ENCODE measurements at regions of chr10 and their contacts with region 1.

Region 1: DNA sequence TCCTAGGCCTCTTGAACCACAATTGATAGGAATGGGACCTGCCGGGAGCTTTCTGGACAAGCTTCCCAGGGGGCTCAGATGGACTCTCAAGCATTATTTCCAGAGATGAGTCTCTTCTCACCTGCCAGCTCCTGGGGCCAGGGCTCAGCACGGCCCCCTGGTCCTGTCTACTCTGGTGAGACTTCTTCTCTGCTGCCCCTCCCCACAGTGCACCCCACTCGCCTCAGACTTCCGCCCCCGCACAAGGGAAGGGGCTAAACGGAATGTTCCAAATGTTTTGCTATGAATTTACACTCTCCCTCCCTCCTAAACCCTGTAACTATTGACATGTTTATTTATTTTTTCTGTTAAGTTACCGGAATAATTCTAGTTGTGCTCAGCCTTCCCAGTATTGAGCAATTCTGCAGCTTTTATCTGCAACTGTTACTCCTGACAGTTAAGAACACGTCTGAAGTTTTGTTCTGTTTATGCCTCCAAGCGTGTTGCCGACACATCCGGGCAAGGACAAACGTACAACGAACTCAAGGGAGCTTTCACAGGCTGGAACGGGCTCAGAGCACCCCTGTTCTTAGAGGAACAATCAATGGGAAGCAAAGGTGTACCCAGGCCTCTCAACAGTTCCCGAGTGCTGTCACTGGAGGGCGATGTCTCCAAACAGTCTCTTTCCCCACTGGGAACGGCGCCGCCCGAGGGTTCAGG is 55.2 kb downstream of the FHIP2A start:
- DNase-seq: peak in 2 of 9 donors; percentile 2 to 55
- ATAC-seq: peak; percentile 63
- H3K4me3 ChIP-seq: no peak overlapping the region
- H3K4me3 Mint-ChIP-seq: no peak overlapping the region
- H3K27ac ChIP-seq: no peak overlapping the region
- H3K27ac Mint-ChIP-seq: no peak overlapping the region
- H3K4me1 ChIP-seq: no peaks in the 10 kb centered on the region
- H3K4me1 Mint-ChIP-seq: peaks cover 0 to 30% (median 12%) of the 10 kb centered on the region in 7 donors
- H3K27me3 ChIP-seq: peaks cover 0 to 5% of the 10 kb centered on the region in 2 donors
- H3K27me3 Mint-ChIP-seq: peaks cover 36 to 76% (median 44%) of the 10 kb centered on the region in 5 donors

Region 2: GRCh38 chr10:114937962-114938855 is 61.5 kb after region 1 on chr10 and contains the start of gene TRUB1:
- CTCF ChIA-PET with region 1: no interaction called
- POLR2A ChIA-PET with region 1: no interaction called
- intact Hi-C with region 1: loop called in 1 of 2 experiments (anchors 5 kb)
- DNase-seq: peak; percentile 59 to 91 (median 87)
- ATAC-seq: peak; percentile 100
- H3K4me3 ChIP-seq: peak within 1 kb of the TSS; percentile 87
- H3K4me3 Mint-ChIP-seq: peak within 1 kb of the TSS; percentile 94 to 99 (median 96)
- H3K27ac ChIP-seq: peak within 1 kb of the TSS; percentile 79
- H3K27ac Mint-ChIP-seq: peak within 1 kb of the TSS; percentile 95 to 98 (median 96)
- H3K4me1 ChIP-seq: peaks cover 12 to 23% of the 10 kb centered on the region in 2 donors
- H3K4me1 Mint-ChIP-seq: peaks cover 20 to 43% (median 31%) of the 10 kb centered on the region in 7 donors
- H3K27me3 ChIP-seq: no peaks in the 10 kb centered on the region
- H3K27me3 Mint-ChIP-seq: no peaks in the 10 kb centered on the region
- total RNA-seq, gene TRUB1: 6.8 to 14.6 (median 12.9) TPM

Region 3: DNA sequence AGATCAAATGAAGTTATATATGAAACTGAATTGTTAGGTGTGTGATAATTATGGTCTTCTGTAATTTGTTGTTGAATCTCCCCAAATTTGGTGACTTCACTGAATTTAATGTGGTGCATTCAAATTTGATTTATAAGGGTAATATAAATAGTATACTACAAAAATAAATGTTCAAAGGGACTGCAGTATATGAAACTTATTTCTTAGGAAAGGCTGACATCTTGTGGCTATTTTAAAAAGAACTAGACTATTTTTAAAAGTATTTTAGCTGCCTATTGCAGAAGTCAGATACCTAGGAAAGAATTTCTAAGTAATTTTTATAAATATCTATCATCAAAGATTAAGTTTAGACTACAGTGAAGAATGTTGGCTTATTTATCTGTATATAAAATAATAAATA is 253.0 kb after region 1 on chr10:
- CTCF ChIA-PET with region 1: no interaction called
- POLR2A ChIA-PET with region 1: no interaction called
- intact Hi-C with region 1: loop called in 1 of 2 experiments (anchors 1 kb)
- DNase-seq: peak in 4 of 9 donors; percentile 2 to 14 (median 6)
- ATAC-seq: no peak
- H3K4me3 ChIP-seq: no peak overlapping the region
- H3K4me3 Mint-ChIP-seq: no peak overlapping the region
- H3K27ac ChIP-seq: no peak overlapping the region
- H3K27ac Mint-ChIP-seq: no peak overlapping the region
- H3K4me1 ChIP-seq: no peaks in the 10 kb centered on the region
- H3K4me1 Mint-ChIP-seq: no peaks in the 10 kb centered on the region
- H3K27me3 ChIP-seq: no peaks in the 10 kb centered on the region
- H3K27me3 Mint-ChIP-seq: peaks cover 1 to 18% (median 12%) of the 10 kb centered on the region in 5 donors

Region 4: GRCh38 chr10:116385994-116386809 is 1509.5 kb after region 1 on chr10:
- CTCF ChIA-PET with region 1: no interaction called
- POLR2A ChIA-PET with region 1: no interaction called
- intact Hi-C with region 1: loop called in 1 of 2 experiments (anchors 5 kb)
- DNase-seq: peak in 3 of 9 donors; percentile 1 to 13 (median 5)
- ATAC-seq: no peak
- H3K4me3 ChIP-seq: no peak overlapping the region
- H3K4me3 Mint-ChIP-seq: no peak overlapping the region
- H3K27ac ChIP-seq: no peak overlapping the region
- H3K27ac Mint-ChIP-seq: no peak overlapping the region
- H3K4me1 ChIP-seq: no peaks in the 10 kb centered on the region
- H3K4me1 Mint-ChIP-seq: no peaks in the 10 kb centered on the region
- H3K27me3 ChIP-seq: peaks cover 0 to 2% of the 10 kb centered on the region in 2 donors
- H3K27me3 Mint-ChIP-seq: peaks cover 0 to 9% (median 4%) of the 10 kb centered on the region in 5 donors